ENCODE measurements at regions of chr3 and their contacts with region 1.

Region 1: GRCh38 chr3:102529452-102529851 is 94.6 kb downstream of the ZPLD1 start:
- DNase-seq: no peak
- H3K4me3 ChIP-seq: no peak overlapping the region
- H3K27ac ChIP-seq: no peak overlapping the region
- H3K4me1 ChIP-seq: peaks cover 19% of the 10 kb centered on the region
- H3K27me3 ChIP-seq: no peaks in the 10 kb centered on the region
- CTCF ChIP-seq: 0 out of 2 replicates have a peak, but pooled peaks have one; percentile 18

Region 2: DNA sequence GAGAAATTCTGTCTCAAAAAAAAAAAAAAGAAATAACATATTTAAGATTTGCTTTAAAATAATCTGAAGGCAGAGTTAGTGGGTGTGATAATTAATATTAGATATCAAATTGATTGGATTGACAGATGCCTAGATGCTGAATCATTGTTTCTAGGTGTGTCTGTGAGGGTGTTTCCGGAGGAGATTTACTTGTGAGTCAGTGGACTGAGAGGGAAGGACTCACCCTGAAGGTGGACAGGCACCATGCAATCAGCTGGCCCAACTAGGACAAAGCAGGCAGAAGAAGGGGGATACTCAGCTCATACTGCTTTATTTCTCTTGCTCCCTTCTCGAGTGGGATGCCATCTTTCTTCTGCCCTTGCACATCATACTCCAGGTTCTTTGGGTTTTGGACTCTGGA is 826.3 kb before region 1 on chr3:
- CTCF ChIA-PET with region 1: no interaction called
- POLR2A ChIA-PET with region 1: no interaction called
- intact Hi-C with region 1: loop called (anchors 5 kb)
- DNase-seq: peak; percentile 67 to 86
- H3K4me3 ChIP-seq: no peak overlapping the region
- H3K27ac ChIP-seq: peak overlapping the region; percentile 57
- H3K4me1 ChIP-seq: peaks cover 22% of the 10 kb centered on the region
- H3K27me3 ChIP-seq: no peaks in the 10 kb centered on the region
- CTCF ChIP-seq: no peak

Region 3: GRCh38 chr3:102299125-102299877 is 230.2 kb before region 1 on chr3:
- CTCF ChIA-PET with region 1: no interaction called
- POLR2A ChIA-PET with region 1: no interaction called
- intact Hi-C with region 1: loop called (anchors 2 kb)
- DNase-seq: peak; percentile 54 to 82
- H3K4me3 ChIP-seq: no peak overlapping the region
- H3K27ac ChIP-seq: peak overlapping the region; percentile 85
- H3K4me1 ChIP-seq: peaks cover 40% of the 10 kb centered on the region
- H3K27me3 ChIP-seq: no peaks in the 10 kb centered on the region
- CTCF ChIP-seq: no peak

Region 4: DNA sequence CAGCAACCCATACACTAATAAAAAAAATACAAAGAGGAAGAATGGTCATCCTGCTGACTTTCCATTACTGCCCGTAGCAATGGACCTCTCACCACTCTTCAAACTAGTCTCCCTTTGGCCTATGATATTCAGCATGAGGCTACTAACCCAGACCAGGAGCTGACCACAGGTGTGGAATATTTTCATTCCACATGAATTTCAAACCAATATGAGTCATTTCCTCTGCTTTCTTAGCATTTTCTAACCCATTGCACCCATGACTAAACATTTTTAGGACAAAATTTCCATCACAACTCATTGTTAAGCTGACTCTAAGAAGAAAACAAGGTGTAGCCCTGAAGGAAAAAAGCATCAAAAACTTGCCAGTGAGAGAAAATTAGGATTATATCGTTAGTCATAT is 128.7 kb before region 1 on chr3:
- CTCF ChIA-PET with region 1: no interaction called
- POLR2A ChIA-PET with region 1: no interaction called
- intact Hi-C with region 1: loop called (anchors 5 kb)
- DNase-seq: peak; percentile 29 to 75
- H3K4me3 ChIP-seq: no peak overlapping the region
- H3K27ac ChIP-seq: peak overlapping the region; percentile 48
- H3K4me1 ChIP-seq: peaks cover 31% of the 10 kb centered on the region
- H3K27me3 ChIP-seq: no peaks in the 10 kb centered on the region
- CTCF ChIP-seq: no peak